Activated CD4-positive, alpha-beta T cell treated with anti-CD3 and anti-CD28 coated beads for 36 hours (primary cell): ENCODE measurements at regions of chr10 and their contacts with region 1.

Region 1: DNA sequence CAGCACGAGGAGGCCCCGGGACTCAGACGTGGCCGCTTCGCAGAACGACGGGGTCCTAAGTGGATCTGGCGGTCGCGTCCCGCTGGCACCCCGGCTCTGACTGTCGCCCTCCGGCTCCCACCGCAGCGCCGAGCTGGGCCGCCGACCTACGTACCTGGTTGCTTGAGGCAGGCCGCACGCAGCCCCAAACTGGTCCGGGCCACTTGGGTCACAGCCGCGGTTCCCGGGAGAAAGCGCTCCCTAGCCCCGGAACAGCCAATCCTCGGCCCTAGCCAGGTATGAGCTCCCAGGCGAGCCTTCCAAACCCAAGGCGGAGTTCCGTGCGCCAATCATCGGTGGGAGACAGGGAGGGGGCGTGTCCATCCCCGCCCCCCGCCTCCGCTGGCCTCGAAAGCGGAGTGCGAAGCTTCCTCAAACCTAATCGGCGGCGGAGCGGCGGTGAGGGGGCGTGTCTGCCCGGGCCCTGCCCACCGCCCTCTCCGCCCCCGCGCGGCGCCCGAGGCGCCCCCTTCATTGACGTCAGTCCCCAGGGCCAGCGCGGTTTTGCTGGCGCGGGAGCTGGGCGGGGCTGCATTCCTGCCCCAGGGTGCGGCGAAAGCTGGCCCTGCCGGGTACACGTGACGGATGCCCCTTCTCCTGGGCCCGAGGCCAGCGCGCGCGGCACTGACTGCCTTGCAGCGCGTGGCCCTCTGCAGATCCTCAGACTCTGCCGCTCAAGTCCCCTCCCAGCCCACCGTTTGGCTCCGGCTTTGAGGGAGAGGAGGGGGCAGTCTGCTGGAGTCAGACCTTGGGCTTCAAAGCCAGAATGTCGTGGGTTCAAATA is at the start of gene AVPI1:
- DNase-seq: peak; percentile 97
- ATAC-seq: peak; percentile 91
- H3K4me3 Mint-ChIP-seq: peak within 1 kb of the TSS; percentile 76
- H3K27ac Mint-ChIP-seq: peak within 1 kb of the TSS; percentile 51
- H3K4me1 Mint-ChIP-seq: peaks cover 17% of the 10 kb centered on the region
- H3K27me3 Mint-ChIP-seq: no peaks in the 10 kb centered on the region
- total RNA-seq, gene AVPI1: 2.1 to 2.2 TPM

Region 2: DNA sequence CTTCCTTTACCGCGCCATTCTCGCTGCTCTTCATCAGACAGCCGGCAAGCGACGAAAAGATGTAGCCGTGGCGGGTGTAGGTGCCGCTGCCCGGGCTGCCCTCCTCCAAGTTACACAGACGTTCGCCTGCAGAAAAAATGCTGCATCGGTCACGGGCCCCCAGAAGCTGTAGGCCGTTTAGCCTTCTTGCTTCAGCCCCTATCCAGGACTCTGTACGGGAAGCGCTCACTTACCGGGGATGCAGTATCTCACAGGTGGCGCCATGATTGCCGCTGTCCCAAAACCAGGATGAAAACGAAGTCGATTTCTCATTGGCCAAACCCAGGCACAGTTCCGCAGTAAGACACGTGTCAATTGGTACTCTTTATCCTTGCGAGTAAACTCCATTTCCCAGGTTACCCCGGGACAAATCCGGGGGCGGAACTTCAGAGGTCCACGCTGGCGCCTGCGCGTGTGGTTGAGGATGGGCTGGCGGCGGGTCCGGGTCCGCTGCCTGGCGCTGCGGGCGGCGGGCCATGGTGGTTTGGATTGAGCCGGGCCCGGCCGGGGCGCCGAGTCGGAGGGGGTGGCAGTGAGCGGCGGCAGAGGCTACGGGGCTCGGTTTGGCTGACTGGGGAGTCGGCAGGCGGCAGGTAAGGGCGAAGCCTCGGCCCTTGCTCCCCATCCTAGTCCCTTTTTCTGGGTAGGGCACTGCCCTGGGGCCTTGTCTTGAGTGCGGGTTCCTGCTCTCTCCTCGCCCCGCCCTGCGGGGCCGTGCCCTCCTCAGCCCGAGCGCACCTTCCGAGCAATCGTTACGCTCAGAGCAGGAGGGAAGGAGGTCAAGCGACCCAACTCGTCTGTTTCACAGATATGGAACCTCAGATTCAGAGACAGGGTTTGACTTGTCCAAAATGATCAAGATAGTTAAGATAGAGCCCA is 241.2 kb before region 1 on chr10 and contains the starts of genes EXOSC1 and ZDHHC16:
- CTCF ChIA-PET with region 1: no interaction called
- POLR2A ChIA-PET with region 1: no interaction called
- intact Hi-C with region 1: loop called in 1 of 2 experiments (anchors 1 kb)
- DNase-seq: peak; percentile 96
- ATAC-seq: peak; percentile 91
- H3K4me3 Mint-ChIP-seq: peak within 1 kb of the TSS; percentile 86
- H3K27ac Mint-ChIP-seq: peak within 1 kb of the TSS; percentile 90
- H3K4me1 Mint-ChIP-seq: peaks cover 55% of the 10 kb centered on the region
- H3K27me3 Mint-ChIP-seq: no peaks in the 10 kb centered on the region
- total RNA-seq, gene EXOSC1: 52.3 to 54.2 TPM
- total RNA-seq, gene ZDHHC16: 34.6 to 42.8 TPM

Region 3: GRCh38 chr10:97640174-97640867 is 46.9 kb before region 1 on chr10 and contains the start of gene PI4K2A:
- CTCF ChIA-PET with region 1: interaction called, 3 read pairs
- POLR2A ChIA-PET with region 1: interaction called, 4 read pairs
- intact Hi-C with region 1: loop called (anchors 1 kb)
- DNase-seq: peak; percentile 100
- ATAC-seq: peak; percentile 99
- H3K4me3 Mint-ChIP-seq: peak within 1 kb of the TSS; percentile 97
- H3K27ac Mint-ChIP-seq: peak within 1 kb of the TSS; percentile 93
- H3K4me1 Mint-ChIP-seq: peaks cover 18% of the 10 kb centered on the region
- H3K27me3 Mint-ChIP-seq: no peaks in the 10 kb centered on the region
- total RNA-seq, gene PI4K2A: 8.5 to 8.9 TPM

Region 4: GRCh38 chr10:97701438-97702069 is 14.4 kb after region 1 on chr10:
- CTCF ChIA-PET with region 1: interaction called, 23 read pairs
- POLR2A ChIA-PET with region 1: interaction called, 7 read pairs
- intact Hi-C with region 1: no loop called
- DNase-seq: peak; percentile 67
- ATAC-seq: peak; percentile 99
- H3K4me3 Mint-ChIP-seq: no peak overlapping the region
- H3K27ac Mint-ChIP-seq: no peak overlapping the region
- H3K4me1 Mint-ChIP-seq: no peaks in the 10 kb centered on the region
- H3K27me3 Mint-ChIP-seq: peaks cover 6% of the 10 kb centered on the region

Region 5: DNA sequence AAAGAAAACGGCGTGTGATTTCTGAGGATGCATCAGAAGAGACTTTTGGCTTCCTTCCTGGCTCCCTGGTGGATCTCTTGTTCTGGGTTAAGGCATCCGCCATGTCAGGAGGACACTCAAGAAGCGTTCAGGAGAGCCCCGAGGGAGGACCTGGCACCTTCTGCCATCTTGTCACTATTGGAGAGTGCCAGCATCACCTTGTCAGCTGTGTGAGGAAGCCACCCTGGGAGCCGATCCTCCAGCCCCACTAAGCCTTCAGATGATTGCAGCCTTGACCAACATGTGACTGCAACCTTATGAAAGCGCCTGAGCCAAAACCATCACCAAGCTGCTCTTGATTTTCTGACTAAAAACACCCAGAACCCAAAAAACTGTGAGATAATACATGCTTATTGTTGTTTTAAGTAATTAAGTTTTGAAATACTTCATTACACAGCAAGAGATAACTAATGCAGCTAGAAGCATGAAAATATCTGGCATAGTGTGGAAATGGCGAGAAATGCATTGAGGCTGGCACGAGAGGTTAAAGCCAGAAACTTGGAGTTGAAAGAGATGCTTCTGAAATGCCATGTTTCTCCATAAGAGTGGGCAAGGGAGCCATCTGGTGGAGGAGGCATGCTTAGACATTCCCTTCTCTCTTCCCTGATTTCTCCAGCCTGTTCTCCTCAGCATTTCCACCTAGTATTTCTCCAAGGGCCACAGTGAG is 44.3 kb after region 1 on chr10:
- CTCF ChIA-PET with region 1: interaction called, 13 read pairs
- POLR2A ChIA-PET with region 1: interaction called, 8 read pairs
- intact Hi-C with region 1: no loop called
- DNase-seq: peak; percentile 72
- ATAC-seq: peak; percentile 55
- H3K4me3 Mint-ChIP-seq: no peak overlapping the region
- H3K27ac Mint-ChIP-seq: no peak overlapping the region
- H3K4me1 Mint-ChIP-seq: peaks cover 10% of the 10 kb centered on the region
- H3K27me3 Mint-ChIP-seq: peaks cover 4% of the 10 kb centered on the region

Region 6: DNA sequence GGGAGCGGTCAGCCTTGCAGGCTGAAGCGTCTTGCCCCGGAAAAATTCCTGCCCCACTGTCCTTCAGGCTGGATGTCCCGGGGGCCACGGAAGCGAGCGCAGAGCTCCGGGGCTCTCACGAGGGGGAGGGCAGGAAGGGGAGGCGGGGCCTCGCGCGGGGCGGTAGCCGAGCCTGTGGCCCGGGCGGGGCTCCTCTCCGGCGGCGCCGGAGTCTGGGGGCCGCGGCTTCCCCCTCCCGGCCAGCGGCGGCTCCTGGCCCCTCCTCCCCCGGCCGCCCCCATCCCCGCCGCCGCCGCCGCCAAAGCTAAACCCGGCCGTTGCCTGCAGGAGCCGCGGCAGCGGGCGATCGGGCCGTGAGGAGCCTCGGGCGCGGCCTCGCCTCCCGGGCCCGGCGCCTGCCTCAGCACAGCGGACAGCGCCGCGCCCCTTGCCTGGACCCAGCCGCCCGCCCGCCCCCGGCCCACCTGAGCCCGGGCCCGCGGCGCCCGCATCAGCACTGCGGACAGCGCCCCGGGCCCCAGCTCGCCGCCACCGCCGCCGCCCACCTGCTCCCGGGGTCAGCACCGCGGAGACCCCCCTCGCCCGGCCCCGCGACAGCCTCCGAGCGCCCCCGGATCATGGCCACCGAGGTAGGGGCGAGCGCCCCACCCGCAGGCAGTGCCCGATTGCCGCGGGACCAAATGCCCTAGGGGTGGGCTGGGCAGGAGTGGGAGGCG is 162.7 kb after region 1 on chr10 and contains the start of gene GOLGA7B:
- CTCF ChIA-PET with region 1: no interaction called
- POLR2A ChIA-PET with region 1: no interaction called
- intact Hi-C with region 1: loop called in 1 of 2 experiments (anchors 1 kb)
- DNase-seq: peak; percentile 76
- ATAC-seq: peak; percentile 73
- H3K4me3 Mint-ChIP-seq: peak within 1 kb of the TSS; percentile 77
- H3K27ac Mint-ChIP-seq: peak within 1 kb of the TSS; percentile 24
- H3K4me1 Mint-ChIP-seq: peaks cover 35% of the 10 kb centered on the region
- H3K27me3 Mint-ChIP-seq: no peaks in the 10 kb centered on the region
- total RNA-seq, gene GOLGA7B: 0.47 to 0.57 TPM